CD14-positive monocyte (primary cell): ENCODE measurements at regions of chr6 and their contacts with region 1.

Region 1: DNA sequence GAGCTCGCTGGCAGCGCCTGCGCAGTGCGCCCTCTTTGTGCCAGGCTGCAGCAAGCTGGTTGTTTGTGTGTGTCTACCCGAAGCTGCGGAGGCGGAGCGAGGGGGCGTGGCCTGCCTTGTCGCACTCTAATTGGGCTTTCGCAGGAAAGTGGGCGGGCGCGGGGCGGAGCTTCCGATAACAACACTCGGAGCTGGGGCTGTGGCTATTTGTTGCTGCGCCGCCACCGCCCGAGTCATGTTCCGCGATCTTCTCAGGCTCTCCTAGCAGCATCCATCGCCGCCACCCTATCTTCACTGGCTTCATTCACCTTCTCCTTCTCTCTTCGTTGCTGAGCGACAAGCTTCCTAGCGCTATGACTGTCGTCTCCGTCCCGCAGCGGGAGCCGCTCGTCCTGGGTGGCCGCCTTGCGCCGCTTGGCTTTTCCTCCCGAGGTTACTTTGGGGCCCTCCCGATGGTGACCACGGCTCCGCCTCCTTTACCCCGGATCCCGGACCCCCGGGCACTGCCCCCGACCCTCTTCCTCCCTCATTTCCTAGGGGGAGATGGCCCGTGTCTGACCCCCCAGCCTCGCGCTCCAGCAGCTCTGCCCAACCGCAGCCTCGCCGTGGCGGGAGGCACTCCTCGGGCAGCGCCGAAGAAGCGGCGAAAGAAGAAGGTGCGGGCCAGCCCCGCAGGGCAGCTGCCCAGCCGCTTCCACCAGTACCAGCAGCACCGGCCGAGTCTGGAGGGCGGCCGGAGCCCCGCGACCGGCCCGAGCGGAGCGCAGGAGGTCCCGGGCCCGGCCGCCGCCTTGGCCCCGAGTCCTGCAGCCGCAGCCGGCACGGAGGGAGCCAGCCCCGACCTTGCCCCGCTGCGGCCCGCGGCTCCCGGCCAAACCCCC is at the start of gene PNRC1:
- DNase-seq: peak; percentile 100
- H3K4me3 ChIP-seq: peak within 1 kb of the TSS; percentile 66 to 97 (median 96)
- H3K4me3 Mint-ChIP-seq: peak within 1 kb of the TSS; percentile 91 to 99
- H3K27ac ChIP-seq: peak within 1 kb of the TSS; percentile 98
- H3K27ac Mint-ChIP-seq: peak within 1 kb of the TSS; percentile 96 to 99 (median 98)
- H3K4me1 ChIP-seq: peaks cover 26 to 33% of the 10 kb centered on the region in 2 donors
- H3K4me1 Mint-ChIP-seq: peaks cover 36% of the 10 kb centered on the region
- H3K27me3 ChIP-seq: no peaks in the 10 kb centered on the region
- H3K27me3 Mint-ChIP-seq: peaks cover 0 to 2% (median 2%) of the 10 kb centered on the region in 3 donors
- CTCF ChIP-seq: no peak
- polyA plus RNA-seq, gene PNRC1: 102 to 398 (median 348) TPM

Region 2: GRCh38 chr6:88835210-88835609 is 245.6 kb before region 1 on chr6:
- intact Hi-C with region 1: no loop called
- DNase-seq: no peak
- H3K4me3 ChIP-seq: no peak overlapping the region
- H3K4me3 Mint-ChIP-seq: no peak overlapping the region
- H3K27ac ChIP-seq: no peak overlapping the region
- H3K27ac Mint-ChIP-seq: no peak overlapping the region
- H3K4me1 ChIP-seq: no peaks in the 10 kb centered on the region
- H3K4me1 Mint-ChIP-seq: no peaks in the 10 kb centered on the region
- H3K27me3 ChIP-seq: no peaks in the 10 kb centered on the region
- H3K27me3 Mint-ChIP-seq: peaks cover 0 to 1% (median 0%) of the 10 kb centered on the region in 3 donors
- CTCF ChIP-seq: no peak

Region 3: GRCh38 chr6:88982720-88983119 is 98.1 kb before region 1 on chr6:
- intact Hi-C with region 1: loop called in 1 of 2 experiments (anchors 10 kb)
- DNase-seq: peak; percentile 65 to 84 (median 78)
- H3K4me3 ChIP-seq: no peak overlapping the region
- H3K4me3 Mint-ChIP-seq: no peak overlapping the region
- H3K27ac ChIP-seq: no peak overlapping the region
- H3K27ac Mint-ChIP-seq: no peak overlapping the region
- H3K4me1 ChIP-seq: peaks cover 0 to 3% of the 10 kb centered on the region in 2 donors
- H3K4me1 Mint-ChIP-seq: peaks cover 3% of the 10 kb centered on the region
- H3K27me3 ChIP-seq: no peaks in the 10 kb centered on the region
- H3K27me3 Mint-ChIP-seq: no peaks in the 10 kb centered on the region
- CTCF ChIP-seq: peak; percentile 72

Region 4: DNA sequence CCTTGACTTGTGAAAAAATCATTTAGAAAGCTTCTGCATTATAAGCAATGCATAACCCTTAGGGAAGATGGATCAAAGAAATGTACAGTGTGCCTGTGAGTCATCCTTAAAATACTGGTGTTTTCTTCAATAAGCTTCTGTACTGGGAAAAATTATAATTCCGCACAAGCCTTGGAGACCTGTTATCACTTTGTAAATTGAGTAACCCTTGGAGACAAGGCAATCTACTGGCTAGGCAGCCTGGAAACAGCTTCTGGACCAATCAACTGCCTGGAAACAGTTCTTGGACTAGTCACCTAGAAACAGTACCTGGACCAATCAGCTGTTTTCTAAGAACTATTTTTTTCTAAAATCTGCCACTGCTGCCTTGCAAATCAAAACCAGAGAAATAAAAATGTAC is 91.6 kb before region 1 on chr6:
- intact Hi-C with region 1: loop called (anchors 5 to 10 kb)
- DNase-seq: no peak
- H3K4me3 ChIP-seq: no peak overlapping the region
- H3K4me3 Mint-ChIP-seq: no peak overlapping the region
- H3K27ac ChIP-seq: no peak overlapping the region
- H3K27ac Mint-ChIP-seq: no peak overlapping the region
- H3K4me1 ChIP-seq: peaks cover 12 to 15% of the 10 kb centered on the region in 2 donors
- H3K4me1 Mint-ChIP-seq: peaks cover 18% of the 10 kb centered on the region
- H3K27me3 ChIP-seq: no peaks in the 10 kb centered on the region
- H3K27me3 Mint-ChIP-seq: peaks cover 0 to 1% (median 0%) of the 10 kb centered on the region in 3 donors
- CTCF ChIP-seq: no peak

Region 5: DNA sequence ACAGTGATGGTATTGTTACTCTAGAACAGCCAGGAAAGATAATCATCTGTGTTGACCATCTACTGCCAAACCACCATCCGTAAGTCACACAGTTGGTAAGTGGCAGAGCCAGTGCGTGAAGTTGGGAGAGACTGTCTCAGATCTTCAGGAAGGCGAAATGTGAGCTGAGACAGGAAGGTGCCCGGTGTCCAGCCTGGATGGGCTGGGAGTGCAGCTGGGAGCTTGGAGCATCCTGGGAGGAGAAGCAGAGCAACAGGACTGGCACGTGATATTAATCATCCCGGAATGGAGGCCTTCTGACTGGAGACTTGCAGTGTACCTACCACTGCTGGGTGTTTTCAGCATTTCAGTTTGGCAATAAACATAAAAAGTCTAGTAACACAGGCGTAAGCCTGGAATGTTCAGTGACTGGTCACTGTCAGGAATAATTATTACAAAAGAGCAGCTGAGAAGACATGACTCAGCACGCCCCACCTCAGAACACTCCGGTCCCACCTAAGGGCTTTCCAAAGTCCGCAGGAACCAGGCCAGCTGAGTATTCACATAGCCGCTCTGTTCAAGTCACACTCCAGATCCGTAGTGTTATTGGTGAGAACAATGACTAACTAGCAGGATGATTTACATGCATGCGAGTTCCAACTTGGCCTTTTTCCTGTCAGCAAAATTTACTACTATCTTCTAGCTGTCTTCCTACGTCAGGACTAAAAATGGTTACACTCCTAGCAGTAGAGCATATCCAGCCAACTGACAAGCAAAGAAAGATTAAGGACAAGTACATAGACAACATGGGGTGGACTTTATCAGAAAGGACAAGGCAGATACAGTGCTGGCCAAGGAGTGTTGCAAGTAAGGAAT is 45.3 kb before region 1 on chr6:
- intact Hi-C with region 1: loop called (anchors 5 kb)
- DNase-seq: peak; percentile 70 to 97 (median 84)
- H3K4me3 ChIP-seq: peak overlapping the region in 1 of 3 experiments; percentile 33
- H3K4me3 Mint-ChIP-seq: peak overlapping the region in 1 of 2 donors; percentile 78
- H3K27ac ChIP-seq: peak overlapping the region; percentile 82 to 96
- H3K27ac Mint-ChIP-seq: peak overlapping the region; percentile 97 to 100 (median 99)
- H3K4me1 ChIP-seq: peaks cover 34 to 36% of the 10 kb centered on the region in 2 donors
- H3K4me1 Mint-ChIP-seq: peaks cover 39% of the 10 kb centered on the region
- H3K27me3 ChIP-seq: no peaks in the 10 kb centered on the region
- H3K27me3 Mint-ChIP-seq: peaks cover 0 to 2% (median 2%) of the 10 kb centered on the region in 3 donors
- CTCF ChIP-seq: no peak

Region 6: GRCh38 chr6:89339565-89339964 is 258.8 kb after region 1 on chr6:
- intact Hi-C with region 1: no loop called
- DNase-seq: no peak
- H3K4me3 ChIP-seq: no peak overlapping the region
- H3K4me3 Mint-ChIP-seq: no peak overlapping the region
- H3K27ac ChIP-seq: no peak overlapping the region
- H3K27ac Mint-ChIP-seq: peak overlapping the region in 3 of 7 donors; percentile 33 to 70 (median 63)
- H3K4me1 ChIP-seq: peaks cover 0 to 4% of the 10 kb centered on the region in 2 donors
- H3K4me1 Mint-ChIP-seq: peaks cover 12% of the 10 kb centered on the region
- H3K27me3 ChIP-seq: no peaks in the 10 kb centered on the region
- H3K27me3 Mint-ChIP-seq: peaks cover 0 to 1% (median 0%) of the 10 kb centered on the region in 3 donors
- CTCF ChIP-seq: no peak

Region 7: GRCh38 chr6:89352278-89353117 is 271.7 kb after region 1 on chr6 and contains the start of gene UBE2J1:
- intact Hi-C with region 1: loop called (anchors 10 kb)
- DNase-seq: peak; percentile 89 to 94 (median 94)
- H3K4me3 ChIP-seq: peak within 1 kb of the TSS; percentile 97 to 100 (median 97)
- H3K4me3 Mint-ChIP-seq: peak within 1 kb of the TSS; percentile 94 to 95
- H3K27ac ChIP-seq: peak within 1 kb of the TSS; percentile 77 to 91
- H3K27ac Mint-ChIP-seq: peak within 1 kb of the TSS; percentile 93 to 98 (median 96)
- H3K4me1 ChIP-seq: peaks cover 39 to 52% of the 10 kb centered on the region in 2 donors
- H3K4me1 Mint-ChIP-seq: peaks cover 58% of the 10 kb centered on the region
- H3K27me3 ChIP-seq: no peaks in the 10 kb centered on the region
- H3K27me3 Mint-ChIP-seq: peaks cover 0 to 7% (median 1%) of the 10 kb centered on the region in 3 donors
- CTCF ChIP-seq: no peak
- polyA plus RNA-seq, gene UBE2J1: 44.8 to 80.5 (median 66.1) TPM

Region 8: DNA sequence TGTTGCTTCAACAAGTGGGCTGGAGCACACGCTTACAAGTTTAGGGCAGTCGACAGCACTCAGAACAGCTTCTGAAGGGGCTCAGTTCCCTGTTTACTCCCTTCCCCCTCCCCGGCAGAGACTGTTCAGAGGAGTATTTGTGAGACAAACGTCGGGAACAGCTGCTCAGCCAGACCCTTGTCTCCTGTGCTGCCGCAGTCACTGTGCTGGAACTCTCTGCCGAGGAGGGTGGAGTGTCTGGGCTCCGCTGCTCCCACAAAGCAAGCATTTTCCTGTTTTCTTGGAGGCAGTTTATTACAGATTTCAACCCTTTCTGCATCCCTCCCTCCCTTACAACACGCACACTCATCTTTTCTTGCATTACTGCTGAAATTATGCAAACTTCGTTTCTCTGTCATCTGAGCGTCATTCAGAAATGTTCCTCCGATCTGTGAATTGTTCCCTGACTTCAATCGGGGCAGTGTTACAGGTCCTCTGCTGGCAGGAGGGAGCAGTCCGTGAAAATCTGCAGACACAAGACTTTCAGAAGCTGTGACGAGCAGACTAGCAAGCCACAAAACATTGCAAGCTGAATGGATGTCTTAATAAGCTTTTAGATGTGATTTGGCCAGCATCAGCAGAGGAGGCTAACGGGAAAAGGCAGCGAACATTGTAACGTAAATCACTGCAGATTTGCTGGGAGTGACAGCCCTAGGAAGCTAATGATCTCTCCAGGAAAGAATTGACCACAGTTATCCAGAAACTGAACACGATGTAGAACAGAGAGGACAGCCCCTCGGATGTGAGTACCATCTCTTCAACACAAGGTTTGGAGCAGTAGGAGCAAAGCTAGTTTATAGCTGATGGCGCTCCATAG is 481.6 kb after region 1 on chr6:
- intact Hi-C with region 1: no loop called
- DNase-seq: no peak
- H3K4me3 ChIP-seq: no peak overlapping the region
- H3K4me3 Mint-ChIP-seq: no peak overlapping the region
- H3K27ac ChIP-seq: no peak overlapping the region
- H3K27ac Mint-ChIP-seq: no peak overlapping the region
- H3K4me1 ChIP-seq: no peaks in the 10 kb centered on the region
- H3K4me1 Mint-ChIP-seq: peaks cover 3% of the 10 kb centered on the region
- H3K27me3 ChIP-seq: no peaks in the 10 kb centered on the region
- H3K27me3 Mint-ChIP-seq: peaks cover 0 to 5% (median 0%) of the 10 kb centered on the region in 3 donors
- CTCF ChIP-seq: no peak